Naive thymus-derived CD4-positive, alpha-beta T cell (primary cell): ENCODE measurements at regions of chr11 and their contacts with region 1.

Region 1: GRCh38 chr11:121318848-121319834 is 26.6 kb downstream of the SC5D start:
- DNase-seq: peak in 7 of 9 donors; percentile 17 to 64 (median 56)
- ATAC-seq: peak; percentile 87
- H3K4me3 ChIP-seq: no peak overlapping the region
- H3K4me3 Mint-ChIP-seq: peak overlapping the region in 1 of 10 donors; percentile 47
- H3K27ac ChIP-seq: no peak overlapping the region
- H3K27ac Mint-ChIP-seq: peak overlapping the region in 7 of 9 donors; percentile 4 to 49 (median 9)
- H3K4me1 ChIP-seq: peaks cover 0 to 6% of the 10 kb centered on the region in 2 donors
- H3K4me1 Mint-ChIP-seq: peaks cover 15 to 28% (median 23%) of the 10 kb centered on the region in 7 donors
- H3K27me3 ChIP-seq: no peaks in the 10 kb centered on the region
- H3K27me3 Mint-ChIP-seq: peaks cover 0 to 6% (median 0%) of the 10 kb centered on the region in 5 donors

Region 2: DNA sequence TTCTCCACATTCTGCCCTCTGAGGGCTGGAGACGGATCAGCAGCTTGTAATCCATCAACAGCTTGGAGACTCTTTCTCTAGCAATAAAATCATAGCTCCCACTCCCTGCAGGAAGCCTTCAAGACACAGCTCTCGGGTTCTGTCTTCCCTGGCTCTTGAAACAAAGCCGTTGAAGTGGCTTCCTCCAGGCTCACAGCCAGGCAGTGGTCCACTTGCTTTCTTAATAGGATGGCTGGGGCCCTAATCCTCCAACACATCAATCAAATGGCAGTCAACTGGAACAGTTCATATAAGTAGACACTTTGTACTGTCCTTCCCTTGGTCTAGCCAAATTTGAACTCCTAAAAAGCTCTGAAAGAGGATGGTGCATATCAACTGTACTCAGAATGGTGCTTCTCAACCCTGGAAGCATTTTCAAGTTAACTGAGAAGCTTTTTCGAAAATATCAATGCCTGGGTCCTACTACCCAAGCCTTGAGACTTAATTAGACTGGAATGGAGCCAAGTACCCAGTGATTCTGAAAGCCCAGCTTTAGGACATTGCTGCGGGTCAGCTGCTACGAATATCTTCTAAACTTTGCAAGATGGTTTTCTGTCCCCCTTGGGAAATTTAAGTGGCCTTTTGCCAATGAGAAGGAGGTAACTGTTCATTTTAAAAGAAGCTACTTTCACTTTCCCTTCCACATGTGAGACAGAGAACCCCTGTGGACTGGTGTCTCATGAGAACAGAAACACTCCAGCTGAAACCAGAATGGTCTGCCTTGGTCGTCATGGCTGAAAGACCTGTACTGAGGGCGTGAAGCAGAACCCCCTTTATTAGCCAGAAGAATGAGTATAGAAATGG is 48.1 kb after region 1 on chr11:
- CTCF ChIA-PET with region 1: no interaction called
- POLR2A ChIA-PET with region 1: no interaction called
- intact Hi-C with region 1: loop called in 1 of 2 experiments (anchors 2 kb)
- DNase-seq: peak in 7 of 9 donors; percentile 40 to 65 (median 58)
- ATAC-seq: peak; percentile 74
- H3K4me3 ChIP-seq: peak overlapping the region; percentile 53
- H3K4me3 Mint-ChIP-seq: peak overlapping the region; percentile 68 to 94 (median 83)
- H3K27ac ChIP-seq: peak overlapping the region; percentile 55
- H3K27ac Mint-ChIP-seq: peak overlapping the region; percentile 76 to 98 (median 94)
- H3K4me1 ChIP-seq: peaks cover 15 to 33% of the 10 kb centered on the region in 2 donors
- H3K4me1 Mint-ChIP-seq: peaks cover 35 to 59% (median 45%) of the 10 kb centered on the region in 7 donors
- H3K27me3 ChIP-seq: no peaks in the 10 kb centered on the region
- H3K27me3 Mint-ChIP-seq: no peaks in the 10 kb centered on the region

Region 3: DNA sequence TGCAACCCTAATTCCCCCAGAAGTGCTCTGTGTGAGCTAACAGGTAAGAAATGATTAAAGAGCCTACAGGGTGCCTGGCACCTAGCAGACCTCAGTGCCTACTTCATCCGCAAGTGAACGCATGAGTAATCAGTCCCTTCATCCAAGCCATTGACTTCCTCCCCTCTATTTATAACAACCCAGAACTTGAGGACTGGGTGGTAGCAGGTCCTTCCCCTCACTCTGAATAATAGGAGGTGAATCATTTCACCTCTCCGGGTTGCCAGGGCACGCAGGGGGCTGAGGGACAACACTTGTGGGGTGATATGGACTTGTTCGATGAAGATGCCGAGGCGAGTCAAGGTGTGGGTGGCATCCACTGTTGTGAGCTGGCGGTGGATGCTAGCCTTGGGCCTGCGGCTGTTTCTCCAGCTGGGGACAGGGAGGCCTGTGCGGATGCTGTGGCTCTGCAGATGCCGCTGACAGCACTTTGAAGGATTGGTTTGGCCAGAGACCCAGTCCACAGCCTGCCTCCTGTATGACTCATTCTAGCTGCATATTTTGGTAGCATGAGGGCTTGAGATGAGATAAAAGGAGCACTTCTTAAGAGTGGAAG is 145.3 kb after region 1 on chr11:
- CTCF ChIA-PET with region 1: interaction called, 4 read pairs
- POLR2A ChIA-PET with region 1: interaction called, 3 read pairs
- intact Hi-C with region 1: loop called in 1 of 2 experiments (anchors 1 kb)
- DNase-seq: peak in 7 of 9 donors; percentile 29 to 83 (median 45)
- ATAC-seq: peak; percentile 66
- H3K4me3 ChIP-seq: peak overlapping the region; percentile 23
- H3K4me3 Mint-ChIP-seq: peak overlapping the region; percentile 50 to 99 (median 80)
- H3K27ac ChIP-seq: peak overlapping the region; percentile 77
- H3K27ac Mint-ChIP-seq: peak overlapping the region; percentile 85 to 99 (median 92)
- H3K4me1 ChIP-seq: peaks cover 97 to 99% of the 10 kb centered on the region in 2 donors
- H3K4me1 Mint-ChIP-seq: peaks cover 92 to 100% (median 96%) of the 10 kb centered on the region in 7 donors
- H3K27me3 ChIP-seq: no peaks in the 10 kb centered on the region
- H3K27me3 Mint-ChIP-seq: no peaks in the 10 kb centered on the region

Region 4: GRCh38 chr11:121540627-121541026 is 221.5 kb after region 1 on chr11:
- CTCF ChIA-PET with region 1: no interaction called
- POLR2A ChIA-PET with region 1: no interaction called
- intact Hi-C with region 1: loop called in 1 of 2 experiments (anchors 5 kb)
- DNase-seq: no peak
- ATAC-seq: no peak
- H3K4me3 ChIP-seq: no peak overlapping the region
- H3K4me3 Mint-ChIP-seq: no peak overlapping the region
- H3K27ac ChIP-seq: no peak overlapping the region
- H3K27ac Mint-ChIP-seq: peak overlapping the region in 5 of 9 donors; percentile 47 to 65 (median 56)
- H3K4me1 ChIP-seq: peaks cover 9 to 17% of the 10 kb centered on the region in 2 donors
- H3K4me1 Mint-ChIP-seq: peaks cover 39 to 79% (median 63%) of the 10 kb centered on the region in 7 donors
- H3K27me3 ChIP-seq: no peaks in the 10 kb centered on the region
- H3K27me3 Mint-ChIP-seq: no peaks in the 10 kb centered on the region

Region 5: DNA sequence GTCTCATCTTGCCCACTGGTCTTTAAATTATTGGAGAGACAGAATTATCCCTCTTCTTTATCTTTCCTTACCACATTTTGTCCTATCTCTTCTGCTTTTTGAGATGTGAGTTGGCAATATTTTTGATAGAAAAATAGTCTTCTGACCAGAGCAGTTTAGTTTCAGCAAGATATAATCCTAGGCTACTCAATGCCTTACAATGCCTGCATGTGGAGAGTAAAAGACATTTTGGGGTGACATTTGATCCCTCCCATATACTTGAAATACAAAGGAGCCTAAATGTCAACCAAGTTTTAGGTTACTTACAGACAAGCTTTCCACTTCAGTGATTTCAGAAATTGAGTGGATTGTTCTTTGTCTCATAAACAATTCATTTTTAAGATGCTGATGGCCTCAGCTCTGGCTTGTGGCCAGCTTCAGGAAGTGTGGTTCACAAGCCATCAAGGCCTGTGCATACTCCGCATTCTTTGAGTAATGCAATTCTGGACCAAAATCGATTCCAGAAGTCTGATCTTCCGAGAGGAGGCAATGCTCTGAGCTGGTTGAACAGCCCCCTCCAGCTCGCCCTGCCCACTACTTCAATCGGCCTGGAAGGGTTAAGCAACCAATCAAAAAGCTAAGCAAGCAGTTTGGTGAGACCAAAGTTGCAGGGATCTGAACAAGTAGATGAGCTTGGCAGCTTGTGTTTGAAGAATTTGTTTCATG is 522.5 kb after region 1 on chr11:
- CTCF ChIA-PET with region 1: no interaction called
- POLR2A ChIA-PET with region 1: no interaction called
- intact Hi-C with region 1: no loop called
- DNase-seq: no peak
- ATAC-seq: no peak
- H3K4me3 ChIP-seq: no peak overlapping the region
- H3K4me3 Mint-ChIP-seq: no peak overlapping the region
- H3K27ac ChIP-seq: no peak overlapping the region
- H3K27ac Mint-ChIP-seq: no peak overlapping the region
- H3K4me1 ChIP-seq: no peaks in the 10 kb centered on the region
- H3K4me1 Mint-ChIP-seq: peaks cover 0 to 2% (median 0%) of the 10 kb centered on the region in 7 donors
- H3K27me3 ChIP-seq: no peaks in the 10 kb centered on the region
- H3K27me3 Mint-ChIP-seq: peaks cover 0 to 7% (median 5%) of the 10 kb centered on the region in 5 donors

Region 6: DNA sequence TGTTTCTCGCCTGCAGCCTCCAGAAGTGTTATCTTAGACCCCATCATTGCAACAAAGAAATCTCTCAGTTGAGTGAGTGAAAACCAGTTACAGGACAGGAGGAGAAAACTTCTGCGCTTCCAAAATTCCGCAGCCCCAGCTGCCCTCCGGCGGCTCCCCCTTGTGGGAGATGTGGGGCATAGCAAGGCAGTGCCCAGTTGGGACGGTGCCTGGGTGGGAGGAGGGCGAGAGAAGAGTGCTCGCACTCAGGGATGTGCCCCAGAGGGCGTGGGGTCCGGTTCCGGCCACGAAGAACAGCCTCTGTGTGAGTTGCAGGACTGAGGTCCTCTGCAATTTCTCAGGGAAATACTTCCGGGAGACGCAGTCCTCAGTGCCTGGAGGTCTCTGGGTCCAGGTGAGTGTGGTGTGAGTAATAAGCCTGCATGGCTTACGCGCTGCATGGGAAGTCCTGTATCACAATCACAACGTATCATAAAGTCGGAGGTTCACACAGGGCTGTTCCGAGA is 883.9 kb after region 1 on chr11:
- CTCF ChIA-PET with region 1: no interaction called
- POLR2A ChIA-PET with region 1: no interaction called
- intact Hi-C with region 1: loop called in 1 of 2 experiments (anchors 10 kb)
- DNase-seq: peak in 6 of 9 donors; percentile 3 to 50 (median 16)
- ATAC-seq: peak; percentile 76
- H3K4me3 ChIP-seq: no peak overlapping the region
- H3K4me3 Mint-ChIP-seq: no peak overlapping the region
- H3K27ac ChIP-seq: no peak overlapping the region
- H3K27ac Mint-ChIP-seq: no peak overlapping the region
- H3K4me1 ChIP-seq: no peaks in the 10 kb centered on the region
- H3K4me1 Mint-ChIP-seq: peaks cover 0 to 9% (median 0%) of the 10 kb centered on the region in 7 donors
- H3K27me3 ChIP-seq: no peaks in the 10 kb centered on the region
- H3K27me3 Mint-ChIP-seq: peaks cover 21 to 68% (median 42%) of the 10 kb centered on the region in 5 donors